CD14-positive monocyte (primary cell): ENCODE measurements at regions of chr2 and their contacts with region 1.

Region 1: DNA sequence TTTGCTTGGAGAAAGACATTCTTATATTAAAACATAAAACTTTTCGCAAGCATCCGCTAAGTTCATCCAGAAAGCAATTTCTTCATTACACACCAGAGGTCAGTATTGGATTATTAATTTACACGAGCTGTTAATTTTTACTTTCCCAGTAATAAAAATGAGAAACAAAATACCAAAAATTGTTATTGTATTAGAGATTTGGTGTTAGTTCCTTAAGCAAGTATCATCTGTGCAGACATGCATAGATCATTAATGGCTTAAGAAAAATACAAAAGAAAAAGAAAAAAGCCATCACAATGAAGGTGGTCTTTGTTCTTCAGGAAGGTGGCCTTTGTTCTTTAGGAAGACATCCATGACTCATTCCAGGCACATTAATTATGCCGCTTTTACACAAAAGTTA is 53.6 kb upstream of the HNMT start:
- DNase-seq: peak in 1 of 3 donors; percentile 28
- H3K4me3 ChIP-seq: no peak overlapping the region
- H3K4me3 Mint-ChIP-seq: no peak overlapping the region
- H3K27ac ChIP-seq: no peak overlapping the region
- H3K27ac Mint-ChIP-seq: no peak overlapping the region
- H3K4me1 ChIP-seq: no peaks in the 10 kb centered on the region
- H3K4me1 Mint-ChIP-seq: no peaks in the 10 kb centered on the region
- H3K27me3 ChIP-seq: no peaks in the 10 kb centered on the region
- H3K27me3 Mint-ChIP-seq: peaks cover 0 to 2% (median 0%) of the 10 kb centered on the region in 3 donors
- CTCF ChIP-seq: peak; percentile 75

Region 2: DNA sequence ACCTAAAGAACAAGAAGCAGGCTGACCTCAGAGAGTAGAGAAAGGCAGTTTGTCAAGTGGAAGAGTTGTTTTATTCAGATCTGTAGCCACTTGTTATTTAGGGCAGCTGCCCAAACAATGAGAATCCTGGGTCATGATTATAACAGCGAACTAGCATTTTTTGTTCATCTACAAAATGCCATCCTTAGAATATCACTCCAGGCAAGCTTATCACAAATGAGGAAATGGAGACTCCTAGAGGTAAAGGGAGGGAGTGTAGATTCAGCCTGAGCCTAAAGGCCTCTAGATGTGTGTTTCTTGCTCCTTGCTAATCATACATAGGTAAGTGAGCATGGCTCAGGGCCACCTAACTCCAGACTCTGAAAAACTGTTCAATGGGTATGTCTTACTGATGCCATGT is 179.7 kb after region 1 on chr2:
- intact Hi-C with region 1: loop called (anchors 5 to 10 kb)
- DNase-seq: peak; percentile 27 to 54 (median 49)
- H3K4me3 ChIP-seq: no peak overlapping the region
- H3K4me3 Mint-ChIP-seq: no peak overlapping the region
- H3K27ac ChIP-seq: no peak overlapping the region
- H3K27ac Mint-ChIP-seq: no peak overlapping the region
- H3K4me1 ChIP-seq: peaks cover 10 to 13% of the 10 kb centered on the region in 2 donors
- H3K4me1 Mint-ChIP-seq: peaks cover 11% of the 10 kb centered on the region
- H3K27me3 ChIP-seq: peaks cover 0 to 2% of the 10 kb centered on the region in 2 donors
- H3K27me3 Mint-ChIP-seq: peaks cover 0 to 1% (median 0%) of the 10 kb centered on the region in 3 donors
- CTCF ChIP-seq: peak; percentile 84

Region 3: GRCh38 chr2:138373993-138374408 is 463.4 kb after region 1 on chr2:
- intact Hi-C with region 1: loop called in 1 of 2 experiments (anchors 5 kb)
- DNase-seq: peak in 1 of 3 donors; percentile 10
- H3K4me3 ChIP-seq: no peak overlapping the region
- H3K4me3 Mint-ChIP-seq: no peak overlapping the region
- H3K27ac ChIP-seq: no peak overlapping the region
- H3K27ac Mint-ChIP-seq: no peak overlapping the region
- H3K4me1 ChIP-seq: no peaks in the 10 kb centered on the region
- H3K4me1 Mint-ChIP-seq: no peaks in the 10 kb centered on the region
- H3K27me3 ChIP-seq: no peaks in the 10 kb centered on the region
- H3K27me3 Mint-ChIP-seq: peaks cover 0 to 3% (median 0%) of the 10 kb centered on the region in 3 donors
- CTCF ChIP-seq: peak; percentile 59

Region 4: GRCh38 chr2:138827426-138828054 is 916.9 kb after region 1 on chr2:
- intact Hi-C with region 1: loop called (anchors 5 kb)
- DNase-seq: peak; percentile 48 to 70 (median 64)
- H3K4me3 ChIP-seq: no peak overlapping the region
- H3K4me3 Mint-ChIP-seq: no peak overlapping the region
- H3K27ac ChIP-seq: no peak overlapping the region
- H3K27ac Mint-ChIP-seq: no peak overlapping the region
- H3K4me1 ChIP-seq: peaks cover 8% of the 10 kb centered on the region in 2 donors
- H3K4me1 Mint-ChIP-seq: peaks cover 14% of the 10 kb centered on the region
- H3K27me3 ChIP-seq: no peaks in the 10 kb centered on the region
- H3K27me3 Mint-ChIP-seq: peaks cover 0 to 1% (median 0%) of the 10 kb centered on the region in 3 donors
- CTCF ChIP-seq: peak; percentile 85